ENCODE measurements at regions of chr1 and their contacts with region 1.

Region 1: DNA sequence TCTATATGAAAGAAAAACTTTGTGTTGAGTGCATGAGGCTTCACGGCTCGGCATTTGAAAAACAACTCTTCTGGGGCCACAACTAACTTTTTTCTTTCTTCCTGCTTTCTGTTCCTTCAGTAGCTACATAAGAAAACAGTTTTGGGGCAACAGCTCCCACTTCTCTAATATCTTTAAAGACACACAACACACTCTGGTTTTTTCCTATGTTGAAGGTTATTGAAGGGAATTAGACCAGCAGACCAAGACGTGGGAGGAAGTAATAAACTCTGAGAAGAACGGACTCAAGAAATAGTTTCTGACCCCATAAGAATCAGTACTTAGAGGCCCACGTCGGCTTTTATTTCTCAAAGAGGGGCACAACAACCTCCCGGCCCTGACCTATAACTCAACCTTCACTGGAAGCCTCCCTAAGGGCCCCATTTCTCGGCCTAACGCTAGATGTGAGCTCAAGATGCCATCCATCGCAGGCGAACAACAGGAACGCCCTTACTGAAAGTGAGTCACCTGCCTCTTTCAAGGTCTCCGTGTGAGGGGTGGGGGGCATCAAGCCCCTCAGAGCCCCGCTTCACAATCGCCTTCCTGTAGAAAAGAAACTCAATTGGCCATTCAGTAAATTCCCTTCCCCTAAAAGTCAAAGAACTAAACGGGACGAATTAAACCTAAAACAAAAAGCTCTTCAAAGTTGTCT is 844 bp downstream of the ZMYM6 start:
- DNase-seq: peak; percentile 40
- H3K4me3 Mint-ChIP-seq: peak overlapping the region; percentile 90
- H3K27ac Mint-ChIP-seq: peak overlapping the region; percentile 97
- H3K4me1 Mint-ChIP-seq: peaks cover 19% of the 10 kb centered on the region
- H3K27me3 Mint-ChIP-seq: no peaks in the 10 kb centered on the region
- CTCF ChIP-seq: no peak

Region 2: GRCh38 chr1:34790985-34791384 is 239.9 kb before region 1 on chr1:
- CTCF ChIA-PET with region 1: no interaction called
- POLR2A ChIA-PET with region 1: no interaction called
- intact Hi-C with region 1: no loop called
- DNase-seq: no peak
- H3K4me3 Mint-ChIP-seq: no peak overlapping the region
- H3K27ac Mint-ChIP-seq: no peak overlapping the region
- H3K4me1 Mint-ChIP-seq: peaks cover 9% of the 10 kb centered on the region
- H3K27me3 Mint-ChIP-seq: no peaks in the 10 kb centered on the region
- CTCF ChIP-seq: no peak

Region 3: GRCh38 chr1:34984793-34985608 is 45.9 kb before region 1 on chr1 and contains the start of gene TMEM35B:
- CTCF ChIA-PET with region 1: no interaction called
- POLR2A ChIA-PET with region 1: interaction called, 11 read pairs
- intact Hi-C with region 1: no loop called
- DNase-seq: peak; percentile 44
- H3K4me3 Mint-ChIP-seq: peak within 1 kb of the TSS; percentile 90
- H3K27ac Mint-ChIP-seq: peak within 1 kb of the TSS; percentile 73
- H3K4me1 Mint-ChIP-seq: peaks cover 11% of the 10 kb centered on the region
- H3K27me3 Mint-ChIP-seq: no peaks in the 10 kb centered on the region
- CTCF ChIP-seq: no peak
- total RNA-seq, gene TMEM35B: 18.7 and 21.9 TPM in 2 replicates

Region 4: DNA sequence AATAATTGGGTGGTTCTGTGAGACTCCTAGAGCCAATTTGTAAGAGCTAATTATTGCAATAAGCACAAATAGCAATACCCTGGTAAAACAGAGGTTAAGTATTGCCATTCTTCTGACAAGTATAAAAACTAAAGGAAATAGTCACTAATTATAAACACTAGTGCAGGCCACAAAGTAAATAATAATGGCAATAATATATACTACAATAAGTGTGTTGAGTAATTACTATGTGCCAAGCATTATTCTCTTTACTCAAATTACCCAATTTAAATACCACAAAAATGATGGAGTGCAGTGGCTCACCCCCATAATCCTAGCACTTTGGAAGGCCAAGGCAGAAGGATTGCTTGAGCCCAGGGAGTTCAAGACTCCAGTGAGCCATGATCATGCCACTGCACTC is 14.5 kb before region 1 on chr1:
- CTCF ChIA-PET with region 1: interaction called, 3 read pairs
- POLR2A ChIA-PET with region 1: interaction called, 29 read pairs
- intact Hi-C with region 1: no loop called
- DNase-seq: no peak
- H3K4me3 Mint-ChIP-seq: no peak overlapping the region
- H3K27ac Mint-ChIP-seq: no peak overlapping the region
- H3K4me1 Mint-ChIP-seq: no peaks in the 10 kb centered on the region
- H3K27me3 Mint-ChIP-seq: no peaks in the 10 kb centered on the region
- CTCF ChIP-seq: no peak

Region 5: DNA sequence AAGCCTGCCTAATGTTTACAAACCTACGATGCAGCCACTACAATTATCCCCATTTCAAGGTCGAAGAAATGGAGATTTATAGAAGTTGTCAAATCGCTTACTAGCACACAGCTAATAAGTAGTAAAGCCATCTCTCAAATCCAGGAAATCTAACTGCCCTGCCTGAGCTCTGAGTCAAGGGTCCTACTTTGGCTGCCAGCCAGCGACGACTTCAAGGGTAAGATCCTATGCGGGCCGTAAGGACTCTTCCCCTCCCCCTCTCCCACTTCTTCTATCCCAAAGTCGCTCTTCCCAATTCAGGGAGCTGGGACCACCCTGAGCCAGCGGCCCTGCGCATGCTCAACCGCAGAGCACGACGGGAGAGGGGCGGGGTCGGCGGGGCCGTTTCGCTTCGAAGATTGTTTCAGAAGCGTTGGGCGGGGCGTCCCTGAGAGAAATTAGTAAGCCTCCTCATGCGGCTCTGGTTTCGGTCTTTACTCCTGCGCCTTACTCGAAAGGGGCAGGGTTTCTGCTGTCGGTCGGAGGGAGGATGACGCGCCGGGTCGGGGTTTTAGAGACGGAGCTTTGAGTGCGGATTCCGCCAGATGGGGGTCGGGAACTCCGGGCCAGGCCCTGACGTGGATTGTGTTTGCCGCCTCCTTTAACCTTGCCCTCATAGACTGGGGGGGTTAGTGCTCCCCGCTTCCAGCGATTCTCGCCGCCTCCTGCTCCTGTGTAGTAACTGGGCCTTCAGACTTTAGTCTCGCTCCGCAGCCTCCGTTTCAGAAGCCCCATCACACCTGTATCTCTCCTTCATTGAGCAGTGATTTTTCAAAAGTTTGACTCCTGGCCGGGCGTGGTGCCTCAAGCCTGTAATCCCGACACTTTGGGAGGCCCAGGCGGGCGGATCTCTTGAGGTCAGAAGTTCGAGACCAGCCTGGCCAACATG is 48.4 kb after region 1 on chr1 and contains the start of gene ZMYM1:
- CTCF ChIA-PET with region 1: no interaction called
- POLR2A ChIA-PET with region 1: interaction called, 122 read pairs
- intact Hi-C with region 1: loop called (anchors 1 kb)
- DNase-seq: peak; percentile 82
- H3K4me3 Mint-ChIP-seq: peak within 1 kb of the TSS; percentile 98
- H3K27ac Mint-ChIP-seq: peak within 1 kb of the TSS; percentile 98
- H3K4me1 Mint-ChIP-seq: peaks cover 17% of the 10 kb centered on the region
- H3K27me3 Mint-ChIP-seq: no peaks in the 10 kb centered on the region
- CTCF ChIP-seq: no peak
- total RNA-seq, gene ZMYM1: 19.2 and 21.2 TPM in 2 replicates

Region 6: DNA sequence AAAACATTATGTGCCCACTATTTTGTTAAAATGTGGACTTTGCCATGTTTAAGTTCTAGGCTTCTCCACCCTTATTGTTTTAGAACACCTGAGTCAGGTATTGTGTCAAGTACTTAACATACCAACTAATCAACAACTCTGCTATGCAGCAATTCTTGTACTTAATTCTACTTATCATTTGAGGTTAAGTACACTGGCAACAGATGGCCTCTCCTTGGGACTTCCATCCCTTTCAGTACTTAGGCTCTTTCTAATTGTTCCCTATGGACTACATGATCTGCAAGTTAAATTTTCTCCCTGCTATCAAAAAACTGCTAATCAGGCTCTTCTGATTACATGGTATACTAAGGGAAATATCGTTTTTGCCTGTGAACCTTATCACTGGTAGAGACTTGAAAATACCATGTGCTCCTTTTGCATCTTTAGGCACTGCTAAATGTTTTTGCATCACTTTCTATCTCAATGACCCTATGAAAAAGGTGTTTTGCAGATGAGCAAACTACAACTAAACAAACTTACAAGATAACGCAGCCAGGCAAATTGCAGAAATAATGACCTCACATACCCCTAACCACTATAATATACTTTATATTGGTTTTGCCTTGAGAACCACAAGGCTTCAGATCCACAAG is 143.1 kb after region 1 on chr1:
- CTCF ChIA-PET with region 1: no interaction called
- POLR2A ChIA-PET with region 1: interaction called, 3 read pairs
- intact Hi-C with region 1: loop called (anchors 5 kb)
- DNase-seq: no peak
- H3K4me3 Mint-ChIP-seq: no peak overlapping the region
- H3K27ac Mint-ChIP-seq: no peak overlapping the region
- H3K4me1 Mint-ChIP-seq: no peaks in the 10 kb centered on the region
- H3K27me3 Mint-ChIP-seq: no peaks in the 10 kb centered on the region
- CTCF ChIP-seq: no peak

Region 7: GRCh38 chr1:35192853-35193664 is 162.2 kb after region 1 on chr1 and contains the start of gene SFPQ:
- CTCF ChIA-PET with region 1: no interaction called
- POLR2A ChIA-PET with region 1: interaction called, 9 read pairs
- intact Hi-C with region 1: loop called (anchors 5 kb)
- DNase-seq: peak; percentile 99
- H3K4me3 Mint-ChIP-seq: peak within 1 kb of the TSS; percentile 85
- H3K27ac Mint-ChIP-seq: peak within 1 kb of the TSS; percentile 96
- H3K4me1 Mint-ChIP-seq: peaks cover 28% of the 10 kb centered on the region
- H3K27me3 Mint-ChIP-seq: no peaks in the 10 kb centered on the region
- CTCF ChIP-seq: no peak
- total RNA-seq, gene SFPQ: 275 and 314 TPM in 2 replicates

Region 8: DNA sequence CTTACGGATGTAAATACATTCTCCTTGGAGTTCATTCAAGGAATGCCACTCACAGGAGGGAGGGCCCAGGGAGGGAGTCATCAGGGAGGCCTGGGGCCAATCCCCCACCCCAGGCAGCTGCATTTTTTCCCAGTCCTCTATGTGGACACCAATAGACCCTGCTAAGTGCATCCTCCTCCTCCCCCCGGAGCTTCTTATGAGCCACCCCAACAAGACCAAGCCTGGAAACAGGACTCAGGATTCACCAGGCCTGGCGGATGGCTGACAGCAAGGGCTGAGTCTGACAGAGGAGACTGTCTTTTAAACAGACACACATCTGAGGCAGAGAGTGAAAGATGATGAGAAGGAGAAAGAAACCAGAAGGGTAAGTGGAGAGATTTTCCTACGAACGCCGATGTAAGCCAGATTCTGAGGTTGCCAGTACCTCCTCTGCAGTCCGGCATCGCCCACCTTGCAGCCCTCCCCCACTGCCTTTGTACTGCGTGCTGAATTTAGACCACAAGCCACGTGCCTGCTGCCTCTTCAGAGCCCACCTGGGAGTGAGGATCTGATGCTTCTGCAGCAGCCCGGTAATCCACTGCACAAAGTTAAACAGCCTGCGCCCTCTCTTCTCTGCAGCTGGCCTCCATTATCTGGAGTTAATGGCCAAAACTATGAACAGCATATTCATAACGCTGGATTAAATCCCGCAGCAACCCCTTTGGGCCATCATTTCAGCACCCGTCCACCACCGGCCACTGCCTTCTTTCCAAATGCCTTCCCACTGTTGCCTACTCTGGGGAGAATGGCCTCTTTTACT is 179.6 kb after region 1 on chr1:
- CTCF ChIA-PET with region 1: no interaction called
- POLR2A ChIA-PET with region 1: no interaction called
- intact Hi-C with region 1: no loop called
- DNase-seq: no peak
- H3K4me3 Mint-ChIP-seq: no peak overlapping the region
- H3K27ac Mint-ChIP-seq: no peak overlapping the region
- H3K4me1 Mint-ChIP-seq: no peaks in the 10 kb centered on the region
- H3K27me3 Mint-ChIP-seq: no peaks in the 10 kb centered on the region
- CTCF ChIP-seq: no peak

Measured in MCF 10A (cell line).